Posterior vena cava (tissue), 2 donors: ENCODE measurements at regions of chr4 and their contacts with region 1.

Region 1: DNA sequence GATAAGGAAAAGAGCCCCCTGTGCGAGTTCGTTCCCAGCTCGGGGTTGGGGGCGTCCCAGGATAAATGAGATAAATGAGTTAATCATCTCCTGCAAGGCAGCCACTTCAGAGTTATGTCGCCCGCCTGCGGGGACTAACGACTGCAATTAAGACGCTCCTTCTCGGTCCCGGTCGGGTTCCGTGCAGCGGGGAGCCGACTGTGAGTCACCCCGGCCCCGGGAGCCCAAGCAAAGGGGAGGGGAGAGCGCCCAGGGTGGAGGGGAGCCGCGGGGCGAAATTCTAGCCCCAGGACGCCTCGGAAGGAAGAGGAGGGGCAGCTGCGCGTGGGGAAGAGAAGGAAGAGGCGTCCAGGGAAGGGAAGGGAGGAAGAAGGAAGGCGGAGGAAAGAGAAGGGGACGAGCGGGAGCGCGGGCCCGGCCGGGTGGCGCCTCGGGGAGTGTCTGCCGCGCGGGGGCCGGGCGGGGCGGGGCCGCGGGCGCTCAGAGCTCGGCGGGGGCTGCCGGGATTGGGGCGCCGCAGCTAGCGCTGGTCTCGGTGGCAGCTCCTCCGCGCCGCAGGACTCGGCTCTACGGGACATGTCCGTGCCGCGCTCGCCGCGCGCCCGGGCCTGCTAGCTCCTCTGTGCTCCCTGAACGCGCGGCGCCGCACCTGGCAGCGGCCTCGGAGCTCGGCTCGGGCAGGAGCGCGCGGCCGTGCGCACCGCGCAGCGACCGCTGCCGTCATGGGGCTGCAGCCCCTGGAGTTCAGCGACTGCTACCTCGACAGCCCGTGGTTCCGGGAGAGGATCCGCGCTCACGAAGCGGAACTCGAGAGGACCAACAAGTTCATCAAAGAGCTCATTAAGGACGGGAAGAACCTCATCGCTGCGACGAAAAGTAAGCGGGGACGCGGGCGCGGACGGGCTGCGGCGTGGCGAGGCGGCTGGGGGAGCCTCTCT is at the start of gene ARHGAP10:
- DNase-seq: peak; percentile 92
- total RNA-seq, gene ARHGAP10: 79.0 to 80.5 TPM

Region 2: DNA sequence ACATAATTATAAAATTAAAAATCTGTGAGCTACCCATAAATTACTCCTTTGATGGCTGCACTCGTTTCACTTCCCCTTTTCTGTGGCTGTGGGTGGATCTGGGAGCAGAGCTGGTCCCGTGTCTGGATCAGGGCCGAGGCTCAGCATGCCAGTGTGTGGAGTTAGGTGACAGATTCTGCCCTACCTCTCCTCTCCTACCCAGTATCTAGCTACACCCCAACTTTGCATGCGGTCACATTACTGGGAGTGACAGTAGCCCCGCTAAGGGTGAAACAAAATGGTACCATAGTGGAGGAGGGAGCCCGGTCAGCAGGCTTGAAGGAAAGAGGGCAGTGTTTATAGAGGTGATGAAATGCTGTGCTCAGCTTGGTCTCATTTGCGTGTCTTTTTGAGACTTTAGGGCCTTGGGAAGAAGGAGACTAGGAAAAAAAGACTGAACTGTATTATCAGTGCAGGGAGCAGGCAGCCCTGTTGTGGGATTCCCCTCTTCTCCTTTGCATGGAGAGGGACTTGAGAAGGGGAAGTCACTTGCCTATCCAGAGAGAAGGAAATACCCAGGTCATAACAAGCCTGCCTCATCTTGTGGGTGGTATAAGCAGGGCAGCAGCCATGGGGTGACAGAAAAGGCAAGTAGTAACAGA is 48.4 kb after region 1 on chr4:
- intact Hi-C with region 1: loop called in 1 of 2 experiments (anchors 10 kb)
- DNase-seq: no peak

Region 3: GRCh38 chr4:147822128-147822527 is 90.3 kb after region 1 on chr4:
- intact Hi-C with region 1: loop called in 1 of 2 experiments (anchors 10 kb)
- DNase-seq: peak; percentile 82

Region 4: DNA sequence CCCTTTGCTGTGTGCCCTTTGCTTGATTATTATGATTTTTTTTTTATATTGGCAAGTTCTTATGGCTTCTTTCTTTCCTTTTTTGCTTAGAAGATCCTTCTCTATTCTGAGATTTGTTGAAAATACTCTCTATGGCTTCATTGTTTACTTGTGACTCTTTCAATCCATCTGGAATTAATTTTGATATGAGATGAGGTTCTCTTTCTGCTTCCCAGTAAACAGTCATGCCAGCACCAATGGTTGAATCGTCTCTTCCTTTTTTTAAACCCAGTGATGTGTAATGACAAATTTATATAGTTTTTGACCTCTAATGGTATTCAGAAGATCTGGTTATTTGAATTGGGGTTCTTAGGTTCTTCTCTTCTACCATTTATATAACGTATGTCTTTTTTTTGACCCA is 121.9 kb after region 1 on chr4:
- intact Hi-C with region 1: loop called (anchors 5 to 10 kb)
- DNase-seq: no peak

Region 5: DNA sequence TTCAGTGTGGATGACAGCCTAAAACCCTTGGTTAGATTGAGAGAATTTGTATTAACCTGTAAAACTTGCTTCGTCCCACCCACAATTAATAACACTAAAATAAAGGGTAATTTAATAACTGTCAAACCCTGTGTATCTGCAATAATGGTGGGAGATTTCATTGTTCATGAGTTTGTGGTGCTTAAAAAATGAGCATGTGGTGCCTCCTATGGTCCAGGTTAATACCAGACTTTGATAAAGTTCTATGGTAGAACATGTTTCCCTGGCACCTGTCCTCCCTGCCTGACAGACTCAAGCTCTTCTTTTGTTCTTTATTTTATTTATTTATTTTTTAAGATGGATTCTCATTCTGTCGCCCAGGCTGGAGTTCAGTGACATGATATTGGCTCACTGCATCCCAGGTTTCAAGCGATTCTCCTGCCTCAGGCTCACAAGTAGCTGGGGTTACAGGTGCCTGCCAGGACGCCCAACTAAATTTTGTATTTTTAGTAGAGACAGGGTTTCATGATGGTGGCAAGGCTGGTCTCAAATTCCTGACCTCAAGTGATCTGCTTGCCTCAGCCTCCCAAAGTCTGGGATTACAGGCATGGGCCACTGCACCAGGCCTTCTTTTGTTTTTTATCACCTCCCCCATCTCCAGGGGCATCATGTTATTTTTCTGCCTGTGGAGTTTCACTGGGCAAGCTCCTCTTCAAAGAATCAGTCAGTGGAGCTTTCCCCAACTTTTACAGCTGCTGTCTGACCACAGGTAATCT is 421.2 kb after region 1 on chr4:
- intact Hi-C with region 1: no loop called
- DNase-seq: no peak